Dendritic cell treated with granulocyte-macrophage colony-stimulating factor and Interleukin-4, amounts not matched to agents 40 ng/mL and 50 ng/mL, for 4 days (primary cell): ENCODE measurements at regions of chr5 and their contacts with region 1.

Region 1: DNA sequence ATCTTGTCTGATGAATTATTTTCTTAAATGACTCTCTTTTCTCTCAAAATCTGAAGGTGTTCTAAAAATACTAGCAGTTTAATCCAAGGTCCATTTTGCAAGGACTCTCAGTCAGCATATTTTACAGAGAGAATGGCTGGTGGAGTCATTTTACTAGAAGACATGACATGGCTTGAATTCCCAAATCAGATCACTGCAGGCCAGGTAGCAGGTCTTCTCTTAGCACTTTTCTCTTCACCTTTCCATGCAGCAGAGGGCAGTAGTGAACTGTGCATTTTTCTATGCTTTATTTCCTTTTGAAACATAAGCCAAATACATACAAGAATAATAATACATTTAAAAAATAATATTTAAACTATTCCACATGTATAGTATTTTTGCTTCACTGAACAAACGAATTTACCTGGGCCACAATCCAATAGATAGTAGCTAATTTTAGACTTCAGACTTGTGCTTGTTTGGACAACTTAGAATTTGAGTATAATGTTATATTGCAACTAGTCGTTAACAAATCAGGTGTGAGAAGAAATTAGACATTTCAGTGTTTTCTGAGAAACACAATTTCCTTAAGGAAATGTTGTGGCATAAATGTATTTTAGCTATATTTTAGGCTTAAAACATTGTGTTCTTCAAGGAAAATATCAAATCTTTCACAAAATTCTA is 289.4 kb upstream of the DAB2 start:
- H3K4me3 Mint-ChIP-seq: no peak overlapping the region
- H3K27ac Mint-ChIP-seq: no peak overlapping the region
- H3K4me1 Mint-ChIP-seq: peaks cover 4% of the 10 kb centered on the region
- H3K27me3 Mint-ChIP-seq: no peaks in the 10 kb centered on the region

Region 2: DNA sequence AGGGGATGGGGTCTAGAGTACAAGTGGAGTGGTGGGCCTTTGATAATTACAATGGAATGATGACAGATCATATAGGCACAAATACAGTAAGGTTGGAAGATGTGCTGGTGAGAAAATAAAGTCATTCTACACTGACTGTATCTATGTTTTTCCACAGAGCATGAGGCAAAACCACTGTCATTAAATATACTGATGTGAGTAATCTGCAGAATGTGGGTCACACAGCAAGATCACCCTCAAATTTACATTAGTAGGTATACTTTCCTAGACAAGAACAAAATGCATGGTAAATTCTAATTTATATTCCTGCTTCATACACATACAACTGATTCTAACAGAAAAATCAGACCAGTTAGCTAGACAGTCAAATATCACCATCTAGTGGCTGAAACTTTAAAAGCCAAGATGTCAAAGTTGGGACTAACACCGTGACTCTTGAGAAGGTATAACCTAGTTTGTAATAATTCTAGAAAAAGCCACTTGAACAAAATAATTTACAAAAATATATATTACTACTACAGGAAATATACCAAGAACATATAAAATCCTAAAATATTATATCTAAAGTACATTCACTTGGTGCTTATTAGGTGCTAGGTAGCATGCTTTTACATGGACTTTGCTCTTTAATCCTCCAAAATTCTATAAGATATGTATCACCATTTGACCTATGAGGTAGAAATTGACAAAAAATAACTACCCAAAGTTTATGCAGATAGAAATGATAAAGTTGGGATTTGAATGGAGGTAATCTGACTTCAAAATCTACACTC is 1022.1 kb after region 1 on chr5:
- intact Hi-C with region 1: loop called (anchors 1 kb)
- H3K4me3 Mint-ChIP-seq: no peak overlapping the region
- H3K27ac Mint-ChIP-seq: no peak overlapping the region
- H3K4me1 Mint-ChIP-seq: peaks cover 20% of the 10 kb centered on the region
- H3K27me3 Mint-ChIP-seq: no peaks in the 10 kb centered on the region

Region 3: DNA sequence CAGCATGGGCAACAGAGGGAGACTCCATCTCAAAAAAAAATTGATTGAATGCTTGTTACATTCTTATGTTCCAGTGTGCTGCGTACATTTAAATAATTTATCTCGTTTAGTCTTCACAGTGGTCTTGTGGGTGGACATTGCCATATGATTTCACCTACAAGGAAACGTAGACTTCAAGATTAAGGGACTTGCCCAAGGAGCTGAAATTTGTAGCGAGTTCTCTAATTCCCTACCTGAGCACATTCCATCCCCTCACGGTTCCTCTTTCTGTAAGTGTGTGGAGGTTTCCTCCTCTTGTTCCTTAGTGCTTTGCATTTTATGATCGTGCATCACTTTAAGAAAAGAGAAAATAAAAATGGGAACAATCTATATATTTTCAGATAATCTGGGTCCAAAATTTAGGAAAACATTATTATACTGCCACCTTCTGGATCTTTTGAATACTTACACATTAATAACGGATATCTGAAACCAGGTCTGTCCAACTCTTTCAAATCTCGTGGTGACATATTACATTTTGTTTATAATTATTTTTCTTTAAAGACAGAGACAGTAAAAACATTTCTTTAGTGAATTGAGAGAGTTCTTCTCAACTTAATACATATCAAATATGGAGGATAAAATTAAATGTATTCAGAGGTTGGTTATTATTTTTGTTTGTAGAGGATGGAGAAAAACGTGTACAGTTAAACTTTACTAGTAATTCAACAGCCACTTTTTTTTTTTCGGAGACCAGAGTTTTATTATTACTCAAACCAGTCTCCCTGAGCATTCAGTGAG is 1165.2 kb after region 1 on chr5:
- intact Hi-C with region 1: loop called (anchors 5 kb)
- H3K4me3 Mint-ChIP-seq: no peak overlapping the region
- H3K27ac Mint-ChIP-seq: no peak overlapping the region
- H3K4me1 Mint-ChIP-seq: no peaks in the 10 kb centered on the region
- H3K27me3 Mint-ChIP-seq: no peaks in the 10 kb centered on the region